IMR-90 (cell line): ENCODE measurements at regions of chr21 and their contacts with region 1.

Region 1: GRCh38 chr21:36654324-36654723 is 44.6 kb upstream of the SIM2 start:
- DNase-seq: no peak
- ATAC-seq: no peak
- H3K4me3 ChIP-seq: no peak overlapping the region
- H3K27ac ChIP-seq: no peak overlapping the region
- H3K4me1 ChIP-seq: no peaks in the 10 kb centered on the region
- H3K27me3 ChIP-seq: peaks cover 15% of the 10 kb centered on the region
- CTCF ChIP-seq: no peak
- POLR2A ChIP-seq: no peak
- RAD21 ChIP-seq: no peak

Region 2: DNA sequence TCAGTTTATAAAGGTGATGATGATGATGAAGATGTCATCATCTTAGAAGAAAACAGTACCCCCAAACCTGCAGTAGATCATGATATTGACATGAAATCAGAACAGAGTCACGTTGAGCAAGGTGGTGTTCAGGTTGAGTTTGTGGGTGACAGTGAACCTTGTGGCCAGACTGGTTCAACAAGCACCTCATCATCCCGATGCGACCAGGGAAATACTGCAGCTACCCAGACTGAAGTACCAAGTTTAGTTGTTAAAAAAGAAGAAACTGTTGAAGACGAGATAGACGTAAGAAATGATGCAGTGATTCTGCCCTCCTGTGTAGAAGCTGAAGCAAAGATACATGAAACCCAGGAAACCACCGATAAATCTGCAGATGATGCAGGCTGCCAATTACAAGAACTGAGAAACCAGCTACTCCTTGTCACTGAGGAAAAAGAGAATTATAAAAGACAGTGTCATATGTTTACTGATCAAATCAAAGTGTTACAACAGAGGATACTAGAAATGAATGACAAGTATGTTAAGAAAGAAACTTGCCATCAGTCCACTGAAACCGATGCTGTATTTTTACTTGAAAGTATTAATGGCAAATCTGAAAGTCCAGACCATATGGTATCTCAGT is 285.1 kb before region 1 on chr21:
- CTCF ChIA-PET with region 1: no interaction called
- POLR2A ChIA-PET with region 1: interaction called, 19 read pairs
- dilution Hi-C with region 1: no loop called
- in situ Hi-C with region 1: no loop called
- intact Hi-C with region 1: no loop called
- DNase-seq: no peak
- ATAC-seq: no peak
- H3K4me3 ChIP-seq: no peak overlapping the region
- H3K27ac ChIP-seq: no peak overlapping the region
- H3K4me1 ChIP-seq: no peaks in the 10 kb centered on the region
- H3K27me3 ChIP-seq: no peaks in the 10 kb centered on the region
- CTCF ChIP-seq: no peak
- POLR2A ChIP-seq: no peak
- RAD21 ChIP-seq: no peak